ENCODE measurements at regions of chr7 and their contacts with region 1.

Region 1: GRCh38 chr7:100428967-100429636 is 529 bp upstream of the MEPCE start:
- DNase-seq: peak; percentile 100
- H3K4me3 Mint-ChIP-seq: peak overlapping the region; percentile 95
- H3K27ac Mint-ChIP-seq: peak overlapping the region; percentile 99
- H3K4me1 Mint-ChIP-seq: peaks cover 41% of the 10 kb centered on the region
- H3K27me3 Mint-ChIP-seq: peaks cover 10% of the 10 kb centered on the region

Region 2: DNA sequence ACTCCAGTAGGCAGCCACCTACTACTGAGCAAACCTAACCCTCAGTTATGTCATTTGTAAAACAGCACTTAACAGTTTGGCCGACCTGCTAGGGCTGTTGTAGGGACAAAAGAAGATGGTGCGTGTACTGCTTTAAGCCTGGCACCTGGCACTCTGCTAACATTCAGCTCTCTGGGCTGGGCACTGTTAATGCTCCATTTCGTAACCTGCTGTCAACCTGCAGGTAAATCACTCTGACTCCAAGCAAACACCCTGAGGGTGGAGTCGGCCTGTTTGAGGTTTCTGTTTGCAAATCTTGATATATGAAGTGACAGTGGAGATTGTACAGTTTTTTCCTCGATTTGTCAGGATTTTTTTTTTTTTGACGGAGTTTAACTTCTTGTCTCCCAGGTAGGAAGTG is 406.4 kb before region 1 on chr7:
- intact Hi-C with region 1: loop called (anchors 10 kb)
- DNase-seq: no peak
- H3K4me3 Mint-ChIP-seq: no peak overlapping the region
- H3K27ac Mint-ChIP-seq: no peak overlapping the region
- H3K4me1 Mint-ChIP-seq: peaks cover 59% of the 10 kb centered on the region
- H3K27me3 Mint-ChIP-seq: no peaks in the 10 kb centered on the region

Region 3: DNA sequence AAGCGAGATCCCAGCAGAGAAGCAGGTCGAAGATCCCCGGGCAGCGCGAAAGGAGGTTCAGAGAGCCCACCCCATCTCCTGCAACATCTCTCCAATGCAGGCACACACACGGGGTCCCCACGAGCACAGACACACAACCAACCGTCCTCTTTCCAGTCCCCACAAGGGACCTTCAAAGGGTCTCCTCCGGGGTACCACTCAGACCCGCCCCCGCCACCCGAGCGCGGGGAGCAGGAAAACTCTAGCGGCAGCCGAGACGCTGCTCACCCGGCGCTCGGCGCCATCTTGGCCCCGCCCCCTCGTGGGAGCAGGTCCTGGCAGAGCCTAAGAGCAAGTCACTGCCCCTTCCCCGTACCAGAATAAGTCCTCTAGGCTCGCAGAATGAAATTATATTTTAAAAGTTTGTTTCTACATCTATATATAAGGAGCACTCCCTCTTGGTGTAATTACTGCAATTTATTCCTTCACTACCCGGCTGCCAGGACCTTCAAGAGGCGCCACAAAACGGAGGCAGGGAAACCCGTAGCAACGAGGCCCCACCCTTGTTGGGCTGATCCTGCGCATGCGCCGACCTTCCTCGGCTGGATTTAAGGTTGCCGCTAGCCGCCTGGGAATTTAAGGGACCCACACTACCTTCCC is 309.9 kb before region 1 on chr7 and contains the starts of genes CNPY4 and TAF6:
- intact Hi-C with region 1: loop called (anchors 1 kb)
- DNase-seq: peak; percentile 90
- H3K4me3 Mint-ChIP-seq: peak within 1 kb of the TSS; percentile 98
- H3K27ac Mint-ChIP-seq: peak within 1 kb of the TSS; percentile 97
- H3K4me1 Mint-ChIP-seq: peaks cover 16% of the 10 kb centered on the region
- H3K27me3 Mint-ChIP-seq: no peaks in the 10 kb centered on the region
- total RNA-seq, gene CNPY4: 19.6 and 21.7 TPM in 2 replicates
- total RNA-seq, gene TAF6: 72.9 and 79.2 TPM in 2 replicates

Region 4: GRCh38 chr7:100177045-100178001 is 251.8 kb before region 1 on chr7 and contains the starts of genes GPC2 and STAG3:
- intact Hi-C with region 1: loop called (anchors 1 kb)
- DNase-seq: peak; percentile 97
- H3K4me3 Mint-ChIP-seq: peak within 1 kb of the TSS; percentile 82
- H3K27ac Mint-ChIP-seq: peak within 1 kb of the TSS; percentile 83
- H3K4me1 Mint-ChIP-seq: peaks cover 46% of the 10 kb centered on the region
- H3K27me3 Mint-ChIP-seq: peaks cover 15% of the 10 kb centered on the region
- total RNA-seq, gene GPC2: 3.9 and 4.8 TPM in 2 replicates
- total RNA-seq, gene STAG3: 25.0 and 30.6 TPM in 2 replicates

Region 5: DNA sequence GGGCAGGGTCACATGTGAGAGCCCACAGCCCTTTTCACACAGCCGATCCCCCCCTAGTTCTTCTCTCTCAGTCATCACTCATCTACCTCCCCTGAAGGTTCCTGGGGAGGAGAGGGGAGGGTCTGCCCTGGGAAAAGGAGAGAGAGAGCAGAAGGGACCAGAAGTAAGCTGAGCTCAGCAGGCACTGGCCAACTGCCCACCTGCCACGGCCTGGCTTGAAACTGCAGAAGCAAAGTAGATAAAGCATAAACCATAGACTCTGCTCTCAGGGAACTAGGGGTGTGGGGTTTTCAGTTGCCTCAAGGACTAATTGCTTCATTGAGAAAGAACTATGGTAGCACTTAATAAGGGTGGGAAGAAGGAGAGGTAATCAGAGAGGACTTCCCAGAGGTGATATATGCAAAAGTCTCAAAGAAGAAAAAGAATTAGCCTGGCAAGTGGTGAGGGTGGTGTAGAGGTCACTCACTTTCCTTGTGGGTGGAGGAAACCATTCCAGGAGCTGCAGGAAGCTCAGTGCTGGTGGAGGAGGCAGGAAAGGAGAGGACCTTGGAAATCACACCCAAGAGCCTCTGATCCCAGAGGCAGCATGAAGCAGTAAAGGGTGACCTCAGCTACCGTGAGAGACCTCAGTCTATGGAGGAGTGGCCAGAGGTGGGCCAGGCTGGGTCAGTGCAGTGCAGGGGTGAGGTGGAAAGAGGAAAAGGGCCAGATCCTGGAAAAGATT is 38.7 kb before region 1 on chr7:
- intact Hi-C with region 1: no loop called
- DNase-seq: no peak
- H3K4me3 Mint-ChIP-seq: no peak overlapping the region
- H3K27ac Mint-ChIP-seq: no peak overlapping the region
- H3K4me1 Mint-ChIP-seq: peaks cover 7% of the 10 kb centered on the region
- H3K27me3 Mint-ChIP-seq: peaks cover 42% of the 10 kb centered on the region

Region 6: GRCh38 chr7:100478966-100479665 is 50.0 kb after region 1 on chr7 and contains the start of gene TSC22D4:
- intact Hi-C with region 1: loop called (anchors 1 kb)
- DNase-seq: peak; percentile 85
- H3K4me3 Mint-ChIP-seq: peak within 1 kb of the TSS; percentile 99
- H3K27ac Mint-ChIP-seq: peak within 1 kb of the TSS; percentile 93
- H3K4me1 Mint-ChIP-seq: peaks cover 35% of the 10 kb centered on the region
- H3K27me3 Mint-ChIP-seq: peaks cover 6% of the 10 kb centered on the region
- total RNA-seq, gene TSC22D4: 126 and 134 TPM in 2 replicates

Region 7: DNA sequence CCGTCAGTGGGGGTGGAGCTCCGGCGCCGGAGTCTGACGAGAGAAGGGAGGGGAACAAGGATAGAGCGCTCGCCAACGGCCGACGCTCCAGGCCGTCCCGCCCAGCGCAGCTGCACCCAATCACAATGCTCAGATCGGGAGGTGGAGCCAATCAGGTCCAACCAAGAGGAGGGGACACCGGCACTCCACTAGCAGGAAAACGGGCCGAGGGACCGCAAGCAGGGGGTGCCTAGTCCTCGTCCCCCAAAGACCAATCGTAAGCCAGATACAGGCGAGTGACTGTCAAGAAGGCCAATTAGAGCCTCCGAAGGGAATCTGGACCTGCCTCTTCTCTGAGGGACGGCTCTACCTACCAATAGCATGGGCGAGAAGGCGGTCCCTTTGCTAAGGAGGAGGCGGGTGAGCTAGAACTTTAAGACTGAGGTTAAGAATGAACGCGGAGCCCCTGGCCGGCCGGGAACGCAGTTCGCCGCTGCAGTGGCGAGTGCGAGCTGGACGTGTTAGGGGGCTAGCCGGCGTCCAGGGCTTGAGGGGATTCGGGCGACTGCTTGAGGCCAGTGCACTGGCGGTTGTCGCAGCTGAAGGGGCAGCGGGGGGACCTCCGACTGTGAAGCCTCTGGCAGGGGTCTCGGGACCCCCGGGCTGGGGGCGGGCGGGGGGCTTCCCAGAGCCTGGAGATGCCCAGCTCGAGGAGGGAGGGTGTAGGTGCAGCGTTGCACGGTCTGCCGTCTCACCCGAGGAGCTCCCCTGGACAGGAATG is 157.3 kb after region 1 on chr7 and contains the start of gene FBXO24:
- intact Hi-C with region 1: loop called (anchors 1 kb)
- DNase-seq: peak; percentile 100
- H3K4me3 Mint-ChIP-seq: peak within 1 kb of the TSS; percentile 87
- H3K27ac Mint-ChIP-seq: peak within 1 kb of the TSS; percentile 89
- H3K4me1 Mint-ChIP-seq: peaks cover 23% of the 10 kb centered on the region
- H3K27me3 Mint-ChIP-seq: peaks cover 3% of the 10 kb centered on the region
- total RNA-seq, gene FBXO24: 0.27 and 0.41 TPM in 2 replicates

Region 8: GRCh38 chr7:100874577-100875355 is 445.7 kb after region 1 on chr7 and contains the start of gene SRRT:
- intact Hi-C with region 1: loop called (anchors 1 kb)
- DNase-seq: peak; percentile 98
- H3K4me3 Mint-ChIP-seq: peak within 1 kb of the TSS; percentile 98
- H3K27ac Mint-ChIP-seq: peak within 1 kb of the TSS; percentile 97
- H3K4me1 Mint-ChIP-seq: peaks cover 40% of the 10 kb centered on the region
- H3K27me3 Mint-ChIP-seq: no peaks in the 10 kb centered on the region
- total RNA-seq, gene SRRT: 294 and 306 TPM in 2 replicates

Measured in activated T-helper 1 cell treated with anti-CD3 and anti-CD28 coated beads, Interleukin-12 subunit alpha, Interleukin-12 subunit beta, Interleukin-2, Interleukin-4 antibody, amounts not matched to agents 30 ng/mL and 10 ng/mL and 1 ng/mL, durations not matched to agents 14 hours and 24 hours and 36 hours (primary cell).